PC-9 (cell line): ENCODE measurements at regions of chr12 and their contacts with region 1.

Region 1: GRCh38 chr12:53180220-53180930 is at the starts of genes CSAD and ZNF740:
- DNase-seq: peak; percentile 90 to 97
- H3K4me3 ChIP-seq: peak within 1 kb of the TSS; percentile 61
- H3K27ac ChIP-seq: peak within 1 kb of the TSS; percentile 74
- H3K4me1 ChIP-seq: peaks cover 34% of the 10 kb centered on the region
- H3K27me3 ChIP-seq: no peaks in the 10 kb centered on the region
- CTCF ChIP-seq: no peak
- total RNA-seq, gene CSAD: 33.1 and 49.0 TPM in 2 replicates
- total RNA-seq, gene ZNF740: 48.3 and 65.8 TPM in 2 replicates

Region 2: GRCh38 chr12:53231826-53232645 is 51.7 kb after region 1 on chr12 and contains the start of gene RARG:
- CTCF ChIA-PET with region 1: interaction called, 14 read pairs
- POLR2A ChIA-PET with region 1: no interaction called
- intact Hi-C with region 1: no loop called
- DNase-seq: peak; percentile 83 to 90
- H3K4me3 ChIP-seq: peak within 1 kb of the TSS; percentile 100
- H3K27ac ChIP-seq: peak within 1 kb of the TSS; percentile 71
- H3K4me1 ChIP-seq: peaks cover 59% of the 10 kb centered on the region
- H3K27me3 ChIP-seq: no peaks in the 10 kb centered on the region
- CTCF ChIP-seq: no peak
- total RNA-seq, gene RARG: 118 and 124 TPM in 2 replicates

Region 3: DNA sequence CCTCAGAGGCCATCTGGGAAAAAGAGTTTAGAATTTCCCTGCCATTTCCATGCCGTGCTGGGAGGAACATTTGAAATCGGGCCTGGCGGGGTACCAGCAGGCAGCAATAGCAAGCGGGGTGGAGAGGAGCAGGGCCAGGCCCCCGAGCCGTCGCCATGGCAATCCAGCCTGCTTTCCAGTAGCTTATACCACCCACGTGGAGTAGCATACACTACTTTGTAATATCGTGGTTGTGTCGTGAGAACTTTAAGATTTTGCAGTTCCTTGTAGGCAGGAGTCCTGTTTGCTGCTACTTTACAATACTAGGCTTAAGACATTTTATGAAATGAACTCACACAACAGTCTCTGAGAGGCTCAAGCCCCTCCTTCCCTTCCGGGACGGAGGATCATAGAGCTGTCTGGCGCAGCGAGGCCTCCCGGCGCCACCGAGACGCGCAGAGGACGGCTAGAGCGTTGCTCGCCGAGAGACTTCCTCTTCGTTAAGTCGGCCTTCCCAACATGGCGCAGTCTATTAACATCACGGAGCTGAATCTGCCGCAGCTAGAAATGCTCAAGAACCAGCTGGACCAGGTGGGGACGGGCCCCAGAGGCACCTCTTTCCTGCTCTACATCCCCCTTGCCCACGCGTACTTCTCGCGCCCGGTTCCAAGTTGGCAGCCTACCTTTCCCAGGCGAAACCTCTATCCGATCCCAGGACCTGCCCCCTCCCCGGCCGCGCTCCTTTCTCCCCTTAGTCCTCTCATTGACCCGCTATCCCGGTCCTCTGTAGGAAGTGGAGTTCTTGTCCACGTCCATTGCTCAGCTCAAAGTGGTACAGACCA is 114.9 kb after region 1 on chr12 and contains the start of gene PFDN5:
- CTCF ChIA-PET with region 1: no interaction called
- POLR2A ChIA-PET with region 1: interaction called, 24 read pairs
- intact Hi-C with region 1: no loop called
- DNase-seq: peak; percentile 71 to 83
- H3K4me3 ChIP-seq: peak within 1 kb of the TSS; percentile 98
- H3K27ac ChIP-seq: peak within 1 kb of the TSS; percentile 38
- H3K4me1 ChIP-seq: peaks cover 40% of the 10 kb centered on the region
- H3K27me3 ChIP-seq: no peaks in the 10 kb centered on the region
- CTCF ChIP-seq: no peak
- total RNA-seq, gene PFDN5: 291 and 303 TPM in 2 replicates